PC-3 (cell line): ENCODE measurements at regions of chr4 and their contacts with region 1.

Region 1: GRCh38 chr4:171846232-171846631 is 33.0 kb downstream of the GALNTL6 start:
- DNase-seq: peak; percentile 43
- ATAC-seq: no peak
- H3K4me3 ChIP-seq: no peak overlapping the region
- H3K27ac ChIP-seq: no peak overlapping the region
- H3K4me1 ChIP-seq: no peaks in the 10 kb centered on the region
- H3K27me3 ChIP-seq: no peaks in the 10 kb centered on the region
- CTCF ChIP-seq: peak; percentile 55

Region 2: DNA sequence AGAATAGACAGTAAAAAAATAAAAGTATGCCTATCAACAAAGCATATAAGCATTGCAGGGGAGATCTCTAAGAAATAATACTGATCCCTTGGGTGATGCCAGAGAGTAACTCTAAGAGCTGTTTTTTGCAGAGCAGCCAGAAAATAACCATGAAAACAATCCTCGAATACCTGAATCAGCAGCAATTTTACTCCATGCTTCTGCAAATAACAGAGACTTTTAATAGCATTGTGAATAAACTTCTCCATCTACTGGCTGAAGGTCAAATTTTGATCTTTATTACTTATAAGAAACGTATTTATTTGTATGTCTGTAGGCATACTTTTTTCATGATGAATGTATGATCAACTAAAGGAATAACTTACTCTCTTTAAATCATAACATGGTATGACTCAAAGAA is 301.5 kb after region 1 on chr4:
- CTCF ChIA-PET with region 1: no interaction called
- POLR2A ChIA-PET with region 1: no interaction called
- intact Hi-C with region 1: loop called (anchors 2 kb)
- DNase-seq: peak; percentile 42
- ATAC-seq: no peak
- H3K4me3 ChIP-seq: no peak overlapping the region
- H3K27ac ChIP-seq: no peak overlapping the region
- H3K4me1 ChIP-seq: no peaks in the 10 kb centered on the region
- H3K27me3 ChIP-seq: no peaks in the 10 kb centered on the region
- CTCF ChIP-seq: no peak; the same call in 1 of the 2 replicates

Region 3: GRCh38 chr4:172202480-172203076 is 356.3 kb after region 1 on chr4:
- CTCF ChIA-PET with region 1: no interaction called
- POLR2A ChIA-PET with region 1: no interaction called
- intact Hi-C with region 1: loop called (anchors 5 kb)
- DNase-seq: peak; percentile 40
- ATAC-seq: no peak
- H3K4me3 ChIP-seq: no peak overlapping the region
- H3K27ac ChIP-seq: no peak overlapping the region
- H3K4me1 ChIP-seq: no peaks in the 10 kb centered on the region
- H3K27me3 ChIP-seq: no peaks in the 10 kb centered on the region; the same call in 1 of the 2 replicates
- CTCF ChIP-seq: peak; percentile 67